ENCODE measurements at regions of chr6 and their contacts with region 1.

Region 1: DNA sequence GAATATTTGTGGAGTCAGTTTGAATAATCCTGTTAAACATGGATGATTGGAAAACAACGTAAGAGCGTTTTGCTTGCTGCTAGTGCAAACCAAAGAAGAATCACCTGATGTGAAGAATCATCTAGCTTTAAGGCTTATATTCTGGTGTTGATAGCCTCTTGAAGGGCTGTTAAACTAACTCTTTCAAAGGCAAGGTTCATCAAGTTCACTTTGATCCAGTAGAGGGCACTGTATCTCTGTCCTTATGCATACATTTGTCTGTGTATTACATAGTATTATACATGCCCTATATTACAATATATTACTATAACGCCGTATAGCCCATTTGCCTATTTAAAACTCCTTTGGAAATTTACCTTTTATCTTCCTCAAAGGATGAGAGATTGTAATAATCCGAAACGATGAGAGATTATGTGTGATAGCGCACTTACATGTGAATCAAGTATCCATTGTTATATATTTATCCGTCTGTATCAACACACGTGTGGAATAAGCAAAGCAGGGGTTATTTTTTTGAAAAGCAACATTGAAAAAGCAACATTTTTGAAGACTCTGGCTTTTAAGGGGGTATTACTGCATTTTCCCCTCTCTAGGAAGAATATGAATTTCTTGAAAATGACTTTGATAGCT is 50.8 kb upstream of the NRN1 start:
- DNase-seq: no peak
- H3K4me3 Mint-ChIP-seq: no peak overlapping the region
- H3K27ac Mint-ChIP-seq: no peak overlapping the region
- H3K4me1 Mint-ChIP-seq: no peaks in the 10 kb centered on the region
- H3K27me3 Mint-ChIP-seq: peaks cover 27% of the 10 kb centered on the region

Region 2: GRCh38 chr6:6039946-6040509 is 17.5 kb before region 1 on chr6:
- CTCF ChIA-PET with region 1: no interaction called
- intact Hi-C with region 1: no loop called
- DNase-seq: no peak
- H3K4me3 Mint-ChIP-seq: no peak overlapping the region
- H3K27ac Mint-ChIP-seq: no peak overlapping the region
- H3K4me1 Mint-ChIP-seq: no peaks in the 10 kb centered on the region
- H3K27me3 Mint-ChIP-seq: peaks cover 23% of the 10 kb centered on the region

Region 3: GRCh38 chr6:6131492-6132109 is 74.1 kb after region 1 on chr6:
- CTCF ChIA-PET with region 1: interaction called, 14 read pairs
- intact Hi-C with region 1: loop called (anchors 2 kb)
- DNase-seq: peak; percentile 11
- H3K4me3 Mint-ChIP-seq: no peak overlapping the region
- H3K27ac Mint-ChIP-seq: no peak overlapping the region
- H3K4me1 Mint-ChIP-seq: no peaks in the 10 kb centered on the region
- H3K27me3 Mint-ChIP-seq: no peaks in the 10 kb centered on the region

Region 4: DNA sequence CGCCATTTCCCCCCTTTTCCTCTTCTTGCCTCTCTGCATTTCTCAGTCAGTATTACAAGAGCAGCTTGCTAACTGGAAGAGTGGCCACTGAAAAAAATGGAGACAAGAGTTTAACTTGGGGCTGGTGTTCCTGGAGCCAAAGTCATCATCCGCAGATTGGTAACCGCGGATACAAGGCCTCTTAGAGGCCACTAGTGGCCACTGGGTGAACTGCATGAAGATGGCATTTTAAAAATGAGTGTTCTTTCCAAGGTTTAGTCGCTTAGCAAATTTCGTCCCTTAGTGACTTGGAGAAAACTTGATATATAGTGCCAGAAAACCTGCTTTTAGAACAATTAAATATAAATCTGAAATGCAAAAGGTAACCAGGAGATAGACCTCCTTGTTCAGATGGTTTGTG is 258.1 kb after region 1 on chr6:
- CTCF ChIA-PET with region 1: no interaction called
- intact Hi-C with region 1: loop called (anchors 5 kb)
- DNase-seq: peak; percentile 64
- H3K4me3 Mint-ChIP-seq: no peak overlapping the region
- H3K27ac Mint-ChIP-seq: no peak overlapping the region
- H3K4me1 Mint-ChIP-seq: no peaks in the 10 kb centered on the region
- H3K27me3 Mint-ChIP-seq: peaks cover 48% of the 10 kb centered on the region

Region 5: GRCh38 chr6:6494677-6495076 is 437.1 kb after region 1 on chr6:
- CTCF ChIA-PET with region 1: interaction called, 4 read pairs
- intact Hi-C with region 1: loop called (anchors 1 kb)
- DNase-seq: peak; percentile 74
- H3K4me3 Mint-ChIP-seq: no peak overlapping the region
- H3K27ac Mint-ChIP-seq: no peak overlapping the region
- H3K4me1 Mint-ChIP-seq: no peaks in the 10 kb centered on the region
- H3K27me3 Mint-ChIP-seq: no peaks in the 10 kb centered on the region

Measured in activated naive CD4-positive, alpha-beta T cell treated with anti-CD3 and anti-CD28 coated beads for 36 hours (primary cell).